Caco-2 (cell line): ENCODE measurements at regions of chr13 and their contacts with region 1.

Region 1: DNA sequence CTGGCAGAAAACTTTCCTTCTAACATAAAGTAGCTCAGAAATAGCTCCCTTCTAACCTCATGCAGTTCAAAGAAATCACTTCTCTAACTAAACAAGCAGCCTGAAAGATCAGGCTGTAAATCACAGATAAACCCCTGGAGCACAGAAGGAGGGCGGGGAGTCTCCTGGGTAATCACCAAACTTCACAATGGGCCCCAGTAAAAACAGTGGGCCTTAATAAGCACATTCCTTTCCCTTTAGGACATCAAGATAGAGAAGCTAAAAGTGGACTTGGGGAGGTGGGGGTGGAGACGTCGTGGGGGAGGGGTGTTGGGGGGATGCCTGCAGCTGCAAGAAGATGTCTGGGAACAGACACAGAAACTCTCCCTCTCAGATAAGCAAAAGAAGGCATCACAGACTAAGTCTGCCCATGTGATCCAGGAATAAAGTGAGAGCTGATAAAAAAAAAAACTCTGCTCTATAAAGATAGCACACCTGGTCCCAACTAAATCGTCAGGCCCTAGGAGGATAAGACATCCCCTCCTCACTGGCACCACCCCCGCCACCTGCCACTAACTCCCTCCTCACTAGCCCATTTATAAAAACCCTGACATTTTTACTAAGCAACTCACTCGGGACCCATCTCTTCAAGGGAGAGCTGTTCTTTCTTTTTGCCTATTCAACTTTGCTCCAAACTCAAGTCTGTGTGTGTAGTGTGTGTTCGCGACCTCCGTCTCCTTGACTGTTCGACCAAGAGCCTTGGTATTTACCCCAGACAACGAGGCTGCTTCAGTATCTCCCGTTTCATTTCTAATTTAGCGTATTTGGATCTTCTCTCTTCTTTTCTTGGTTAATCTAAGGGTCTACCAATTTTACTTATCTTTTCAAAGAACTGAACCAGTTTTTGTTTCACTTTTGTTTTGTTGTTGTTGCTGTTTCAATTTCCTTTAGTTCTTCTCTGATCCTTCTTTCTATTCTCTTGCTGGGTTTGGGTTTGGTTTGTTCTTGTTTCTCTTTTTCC is 31.7 kb downstream of the DNAJC15 start:
- DNase-seq: peak; percentile 93 to 95
- H3K4me3 ChIP-seq: peak overlapping the region; percentile 35
- H3K4me3 Mint-ChIP-seq: no peak overlapping the region
- H3K27ac Mint-ChIP-seq: no peak overlapping the region
- H3K4me1 ChIP-seq: peaks cover 58% of the 10 kb centered on the region
- H3K4me1 Mint-ChIP-seq: peaks cover 14% of the 10 kb centered on the region
- H3K27me3 ChIP-seq: no peaks in the 10 kb centered on the region
- H3K27me3 Mint-ChIP-seq: no peaks in the 10 kb centered on the region
- CTCF ChIP-seq: no peak

Region 2: DNA sequence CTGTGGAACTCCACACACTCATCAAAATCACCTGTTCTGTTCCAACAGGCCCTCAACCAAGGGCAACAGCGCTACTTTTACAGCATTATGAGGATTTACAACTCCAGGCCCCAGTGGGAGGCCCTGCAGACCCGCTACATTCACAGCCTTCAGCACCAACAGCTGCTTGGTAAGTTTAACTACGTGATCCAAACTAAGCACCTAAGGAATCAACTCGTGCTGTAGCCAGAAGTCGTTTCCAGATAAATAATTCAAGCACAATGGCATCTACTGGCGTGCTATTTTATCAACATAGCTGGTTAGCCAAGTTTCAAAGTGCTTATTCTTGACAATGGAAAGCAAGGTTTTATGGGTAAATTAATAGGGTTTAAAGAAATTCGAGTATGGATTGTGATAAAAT is 268.4 kb before region 1 on chr13:
- CTCF ChIA-PET with region 1: no interaction called
- POLR2A ChIA-PET with region 1: no interaction called
- intact Hi-C with region 1: no loop called
- DNase-seq: no peak
- H3K4me3 ChIP-seq: no peak overlapping the region
- H3K4me3 Mint-ChIP-seq: no peak overlapping the region
- H3K27ac Mint-ChIP-seq: no peak overlapping the region
- H3K4me1 ChIP-seq: no peaks in the 10 kb centered on the region
- H3K4me1 Mint-ChIP-seq: no peaks in the 10 kb centered on the region
- H3K27me3 ChIP-seq: no peaks in the 10 kb centered on the region
- H3K27me3 Mint-ChIP-seq: peaks cover 6% of the 10 kb centered on the region
- CTCF ChIP-seq: no peak

Region 3: DNA sequence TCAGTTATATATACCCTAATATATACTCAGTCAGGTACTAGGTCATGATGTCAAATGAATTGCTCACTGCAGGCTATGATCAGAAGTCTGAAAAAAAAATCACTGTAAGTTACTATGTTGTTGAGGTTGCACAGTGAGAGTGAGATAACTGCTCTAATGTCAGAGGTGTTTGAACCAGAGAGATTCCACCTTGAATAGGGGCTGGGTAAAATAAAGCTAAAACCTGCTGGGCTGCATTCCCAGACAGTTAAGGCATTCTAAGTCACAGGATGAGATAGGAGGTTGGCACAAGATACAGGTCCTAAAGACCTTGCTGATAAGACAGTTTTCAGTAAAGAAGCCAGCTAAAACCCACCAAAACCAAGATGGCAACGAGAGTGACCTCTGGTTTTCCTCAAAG is 73.2 kb before region 1 on chr13:
- CTCF ChIA-PET with region 1: no interaction called
- POLR2A ChIA-PET with region 1: interaction called, 10 read pairs
- intact Hi-C with region 1: loop called (anchors 2 kb)
- DNase-seq: peak; percentile 82
- H3K4me3 ChIP-seq: no peak overlapping the region
- H3K4me3 Mint-ChIP-seq: peak overlapping the region; percentile 34
- H3K27ac Mint-ChIP-seq: peak overlapping the region; percentile 95
- H3K4me1 ChIP-seq: peaks cover 67% of the 10 kb centered on the region
- H3K4me1 Mint-ChIP-seq: peaks cover 72% of the 10 kb centered on the region
- H3K27me3 ChIP-seq: no peaks in the 10 kb centered on the region
- H3K27me3 Mint-ChIP-seq: no peaks in the 10 kb centered on the region
- CTCF ChIP-seq: no peak

Region 4: GRCh38 chr13:42991892-42992763 is 63.0 kb before region 1 on chr13 and contains the start of gene EPSTI1:
- CTCF ChIA-PET with region 1: interaction called, 5 read pairs
- POLR2A ChIA-PET with region 1: interaction called, 15 read pairs
- intact Hi-C with region 1: loop called (anchors 2 kb)
- DNase-seq: peak; percentile 84 to 92
- H3K4me3 ChIP-seq: peak within 1 kb of the TSS; percentile 59
- H3K4me3 Mint-ChIP-seq: peak within 1 kb of the TSS; percentile 91
- H3K27ac Mint-ChIP-seq: peak within 1 kb of the TSS; percentile 91
- H3K4me1 ChIP-seq: peaks cover 49% of the 10 kb centered on the region
- H3K4me1 Mint-ChIP-seq: peaks cover 33% of the 10 kb centered on the region
- H3K27me3 ChIP-seq: no peaks in the 10 kb centered on the region
- H3K27me3 Mint-ChIP-seq: no peaks in the 10 kb centered on the region
- CTCF ChIP-seq: no peak
- total RNA-seq, gene EPSTI1: 80.6 and 86.5 TPM in 2 replicates

Region 5: DNA sequence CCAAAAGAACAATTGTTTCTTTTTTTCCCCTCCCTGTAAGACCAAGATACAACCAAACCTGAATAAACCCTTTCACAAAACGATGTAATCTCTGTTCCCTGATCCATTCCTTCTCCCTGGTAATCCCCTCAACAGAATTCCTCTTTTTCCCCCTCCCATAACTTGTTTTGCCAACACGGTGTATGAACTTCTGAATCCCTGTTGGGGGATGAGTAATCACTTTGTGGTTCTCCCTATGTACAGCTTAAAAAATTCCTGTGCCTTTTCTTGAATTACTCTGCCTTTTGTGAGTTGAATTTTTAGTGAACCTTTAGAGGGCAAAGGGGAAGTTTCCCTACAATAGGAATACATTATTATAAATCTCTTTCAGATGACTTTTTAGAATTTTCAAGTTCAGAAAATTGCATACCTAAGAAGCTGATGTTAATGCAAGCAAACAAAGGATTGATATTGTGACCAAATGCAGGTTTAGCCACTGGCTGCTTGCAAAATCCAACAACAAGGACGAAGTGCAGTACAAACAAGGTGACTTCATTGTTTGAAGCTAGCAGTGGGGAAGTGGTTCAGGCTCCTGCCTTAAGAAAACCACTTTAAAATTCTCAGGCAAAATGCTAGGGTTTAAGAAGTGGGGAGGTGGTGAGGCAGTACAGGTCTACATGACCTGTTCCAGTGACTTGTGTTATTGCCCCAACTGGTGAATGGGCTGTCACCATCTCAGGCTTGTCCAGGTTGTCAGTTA is 48.0 kb before region 1 on chr13:
- CTCF ChIA-PET with region 1: no interaction called
- POLR2A ChIA-PET with region 1: interaction called, 3 read pairs
- intact Hi-C with region 1: loop called (anchors 1 kb)
- DNase-seq: no peak
- H3K4me3 ChIP-seq: no peak overlapping the region
- H3K4me3 Mint-ChIP-seq: peak overlapping the region; percentile 15
- H3K27ac Mint-ChIP-seq: peak overlapping the region; percentile 85
- H3K4me1 ChIP-seq: peaks cover 49% of the 10 kb centered on the region
- H3K4me1 Mint-ChIP-seq: peaks cover 60% of the 10 kb centered on the region
- H3K27me3 ChIP-seq: no peaks in the 10 kb centered on the region
- H3K27me3 Mint-ChIP-seq: no peaks in the 10 kb centered on the region
- CTCF ChIP-seq: no peak

Region 6: DNA sequence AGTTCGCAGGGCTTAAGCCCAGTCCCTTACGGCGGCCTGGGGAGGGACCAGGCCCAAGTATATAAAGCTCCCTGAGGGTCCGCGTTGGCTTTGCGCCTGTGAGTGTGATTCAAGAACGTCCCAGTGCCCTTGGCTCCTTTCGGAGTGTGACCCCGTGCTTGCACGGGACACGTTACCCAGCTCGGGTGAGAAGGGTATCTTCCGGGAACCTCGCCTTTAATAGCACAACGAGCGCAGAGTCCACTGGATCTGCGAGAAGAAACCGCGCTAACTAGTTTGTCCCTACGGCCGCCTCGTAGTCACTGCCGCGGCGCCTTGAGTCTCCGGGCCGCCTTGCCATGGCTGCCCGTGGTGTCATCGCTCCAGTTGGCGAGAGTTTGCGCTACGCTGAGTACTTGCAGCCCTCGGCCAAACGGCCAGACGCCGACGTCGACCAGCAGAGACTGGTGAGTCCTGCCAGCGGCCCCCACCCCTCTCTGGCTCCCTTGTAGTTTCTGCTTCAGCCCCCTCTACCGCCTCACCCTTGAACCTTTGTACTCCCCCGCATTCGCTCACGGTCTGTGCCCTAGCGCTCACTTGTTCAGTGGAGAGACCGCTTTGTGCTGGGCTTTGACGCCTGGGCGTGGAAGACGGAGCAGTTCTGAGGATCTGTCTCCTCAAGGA is 31.7 kb before region 1 on chr13 and contains the start of gene DNAJC15:
- CTCF ChIA-PET with region 1: no interaction called
- POLR2A ChIA-PET with region 1: interaction called, 4 read pairs
- intact Hi-C with region 1: loop called (anchors 2 kb)
- DNase-seq: peak; percentile 83 to 87
- H3K4me3 ChIP-seq: peak within 1 kb of the TSS; percentile 57
- H3K4me3 Mint-ChIP-seq: peak within 1 kb of the TSS; percentile 95
- H3K27ac Mint-ChIP-seq: peak within 1 kb of the TSS; percentile 93
- H3K4me1 ChIP-seq: peaks cover 21% of the 10 kb centered on the region
- H3K4me1 Mint-ChIP-seq: peaks cover 12% of the 10 kb centered on the region
- H3K27me3 ChIP-seq: no peaks in the 10 kb centered on the region
- H3K27me3 Mint-ChIP-seq: no peaks in the 10 kb centered on the region
- CTCF ChIP-seq: no peak
- total RNA-seq, gene DNAJC15: 71.0 and 72.2 TPM in 2 replicates

Region 7: DNA sequence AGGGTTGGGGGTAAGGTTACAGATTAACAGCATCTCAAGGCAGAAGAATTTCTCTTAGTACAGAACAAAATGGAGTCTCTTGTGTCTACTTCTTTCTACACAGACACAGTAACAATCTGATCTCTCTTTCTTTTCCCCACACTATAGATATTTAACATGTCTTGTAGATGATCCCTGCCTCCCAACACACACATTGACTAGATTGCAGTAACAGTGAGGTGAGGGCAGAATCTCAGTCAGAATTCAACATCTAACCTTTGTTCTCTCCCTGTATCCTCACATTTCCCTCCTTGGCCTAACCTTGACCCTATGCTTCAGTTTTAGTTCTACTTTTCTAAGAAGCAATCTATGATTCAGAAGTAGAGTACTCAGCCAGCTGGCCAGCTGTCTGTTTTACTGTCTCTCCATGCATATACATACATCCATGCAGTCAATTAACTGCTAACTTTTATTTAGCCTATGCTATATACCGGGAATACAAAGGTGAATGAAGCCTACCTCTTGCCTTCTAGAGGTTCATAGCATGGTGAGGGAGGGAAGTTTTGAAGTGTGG is 13.7 kb before region 1 on chr13:
- CTCF ChIA-PET with region 1: interaction called, 3 read pairs
- POLR2A ChIA-PET with region 1: interaction called, 11 read pairs
- intact Hi-C with region 1: loop called (anchors 1 kb)
- DNase-seq: no peak
- H3K4me3 ChIP-seq: no peak overlapping the region
- H3K4me3 Mint-ChIP-seq: peak overlapping the region; percentile 68
- H3K27ac Mint-ChIP-seq: peak overlapping the region; percentile 78
- H3K4me1 ChIP-seq: peaks cover 85% of the 10 kb centered on the region
- H3K4me1 Mint-ChIP-seq: peaks cover 74% of the 10 kb centered on the region
- H3K27me3 ChIP-seq: no peaks in the 10 kb centered on the region
- H3K27me3 Mint-ChIP-seq: no peaks in the 10 kb centered on the region
- CTCF ChIP-seq: no peak